ENCODE measurements at regions of chrX and their contacts with region 1.

Region 1: DNA sequence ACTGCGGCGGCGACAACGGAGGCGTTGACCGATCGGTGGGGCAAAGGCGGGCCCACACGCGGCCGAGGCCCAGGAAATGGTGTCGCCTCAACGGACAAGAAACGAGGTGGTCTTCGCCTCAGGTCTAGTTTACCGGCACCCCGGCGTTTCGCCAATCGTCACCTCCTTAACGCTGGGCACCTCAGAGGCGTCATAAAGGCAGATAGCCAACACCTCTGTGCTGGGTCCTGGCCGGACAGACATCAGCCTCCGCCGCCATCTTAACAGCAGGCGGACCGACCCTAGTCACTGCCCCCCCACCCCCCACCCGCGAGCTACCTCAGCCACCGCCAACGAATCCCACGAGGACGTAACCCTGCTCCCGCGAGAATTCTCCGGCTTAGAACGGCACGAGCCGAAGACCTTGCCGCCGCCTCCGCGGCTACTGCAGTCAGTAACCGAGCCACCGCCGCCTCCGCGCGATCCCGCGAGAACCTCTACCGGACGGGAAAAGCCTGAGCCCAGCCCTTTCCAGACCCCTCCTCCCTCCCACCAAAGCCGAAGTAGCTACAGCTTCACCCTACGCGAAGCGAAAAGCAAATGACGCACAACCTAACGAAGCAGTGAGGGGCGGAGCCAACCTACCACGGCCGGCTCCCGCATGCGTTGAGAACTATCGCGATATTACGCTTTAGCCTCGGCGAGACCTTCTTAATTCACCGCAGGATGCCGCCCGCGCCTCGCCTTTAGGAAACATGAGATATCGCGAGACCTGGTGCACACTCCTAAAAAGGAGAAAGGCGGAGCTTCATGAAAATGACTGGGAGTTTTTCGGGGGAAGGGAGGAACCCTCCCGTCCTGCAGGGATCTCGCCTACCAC is 2.7 kb downstream of the HUWE1 start:
- DNase-seq: peak; percentile 95
- ATAC-seq: peak; percentile 72
- H3K4me3 ChIP-seq: peak overlapping the region; percentile 67
- H3K27ac ChIP-seq: peak overlapping the region; percentile 82
- H3K4me1 ChIP-seq: no peaks in the 10 kb centered on the region
- H3K27me3 ChIP-seq: no peaks in the 10 kb centered on the region
- CTCF ChIP-seq: peak in 1 of 3 experiments; percentile 47; a peak in 1 of 6 replicates
- EP300 ChIP-seq: no peak
- POLR2A ChIP-seq: peak; percentile 81
- RAD21 ChIP-seq: no peak

Region 2: GRCh38 chrX:53476371-53476770 is 207.4 kb before region 1 on chrX:
- CTCF ChIA-PET with region 1: no interaction called
- POLR2A ChIA-PET with region 1: no interaction called
- RAD21 ChIA-PET with region 1: no interaction called
- SMC1A ChIA-PET with region 1: no interaction called
- in situ Hi-C with region 1: no loop called
- intact Hi-C with region 1: no loop called
- DNase-seq: no peak
- ATAC-seq: no peak
- H3K4me3 ChIP-seq: no peak overlapping the region
- H3K27ac ChIP-seq: no peak overlapping the region
- H3K4me1 ChIP-seq: no peaks in the 10 kb centered on the region
- H3K27me3 ChIP-seq: no peaks in the 10 kb centered on the region; a peak in 1 of 4 replicates
- CTCF ChIP-seq: no peak
- EP300 ChIP-seq: no peak
- POLR2A ChIP-seq: no peak
- RAD21 ChIP-seq: no peak

Region 3: GRCh38 chrX:53704294-53704693 is 20.5 kb after region 1 on chrX:
- CTCF ChIA-PET with region 1: interaction called, 4 read pairs
- POLR2A ChIA-PET with region 1: interaction called, 9 read pairs
- RAD21 ChIA-PET with region 1: interaction called, 10 read pairs
- SMC1A ChIA-PET with region 1: interaction called, 18 read pairs
- in situ Hi-C with region 1: no loop called
- intact Hi-C with region 1: no loop called
- DNase-seq: no peak
- ATAC-seq: peak; percentile 99
- H3K4me3 ChIP-seq: no peak overlapping the region
- H3K27ac ChIP-seq: peak overlapping the region; percentile 40
- H3K4me1 ChIP-seq: no peaks in the 10 kb centered on the region; the same call in 1 of the 2 replicates
- H3K27me3 ChIP-seq: no peaks in the 10 kb centered on the region
- CTCF ChIP-seq: no peak
- EP300 ChIP-seq: peak in 1 of 2 experiments; percentile 60; a peak in 1 of 4 replicates
- POLR2A ChIP-seq: no peak
- RAD21 ChIP-seq: no peak

Region 4: DNA sequence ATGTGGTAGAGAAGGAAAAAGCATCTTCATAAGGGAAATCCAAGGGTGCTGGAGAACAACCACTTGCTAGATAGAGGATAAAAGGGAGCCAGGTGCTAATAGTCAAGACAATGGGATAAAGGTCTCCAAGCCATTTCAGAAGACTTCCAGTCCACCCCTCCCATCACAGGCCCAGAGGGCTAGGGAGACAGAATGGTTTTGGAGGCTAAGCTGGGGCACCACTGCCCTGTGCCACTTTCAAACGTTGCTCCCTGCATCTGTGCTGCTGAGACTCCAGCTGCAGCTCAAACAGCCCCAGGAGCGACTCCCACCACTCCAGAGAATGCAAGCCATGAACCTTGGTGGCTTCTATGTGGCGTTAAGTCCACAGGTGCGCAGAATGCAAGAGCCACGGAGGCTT is 41.1 kb after region 1 on chrX:
- CTCF ChIA-PET with region 1: no interaction called
- POLR2A ChIA-PET with region 1: no interaction called
- RAD21 ChIA-PET with region 1: no interaction called
- SMC1A ChIA-PET with region 1: no interaction called
- in situ Hi-C with region 1: no loop called
- intact Hi-C with region 1: no loop called
- DNase-seq: no peak
- ATAC-seq: no peak
- H3K4me3 ChIP-seq: no peak overlapping the region
- H3K27ac ChIP-seq: no peak overlapping the region
- H3K4me1 ChIP-seq: no peaks in the 10 kb centered on the region
- H3K27me3 ChIP-seq: no peaks in the 10 kb centered on the region
- CTCF ChIP-seq: no peak
- EP300 ChIP-seq: no peak
- POLR2A ChIP-seq: no peak
- RAD21 ChIP-seq: no peak

Region 5: DNA sequence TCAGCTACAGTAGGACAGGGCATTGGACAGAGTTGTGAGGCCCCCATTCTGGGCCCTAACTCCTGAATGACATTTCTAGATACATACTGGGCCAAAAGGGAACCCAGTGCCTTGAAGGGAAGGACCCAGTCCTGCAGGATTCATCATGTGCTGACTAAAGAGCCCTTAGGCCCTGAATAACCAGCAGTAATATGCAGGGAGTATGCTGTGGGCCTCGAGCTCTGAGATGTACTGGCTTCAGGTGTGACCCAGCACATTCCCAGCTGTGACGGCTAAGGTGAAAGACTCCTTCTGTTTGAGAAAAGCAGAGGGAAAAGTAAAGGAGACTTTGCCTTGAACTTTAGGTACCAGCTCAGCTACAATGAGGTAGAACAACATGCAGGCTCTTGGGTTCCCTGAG is 140.9 kb after region 1 on chrX:
- CTCF ChIA-PET with region 1: interaction called, 28 read pairs
- POLR2A ChIA-PET with region 1: no interaction called
- RAD21 ChIA-PET with region 1: interaction called, 8 read pairs
- SMC1A ChIA-PET with region 1: interaction called, 4 read pairs
- in situ Hi-C with region 1: loop called (anchors 5 kb)
- intact Hi-C with region 1: no loop called
- DNase-seq: no peak
- ATAC-seq: no peak
- H3K4me3 ChIP-seq: no peak overlapping the region
- H3K27ac ChIP-seq: no peak overlapping the region
- H3K4me1 ChIP-seq: no peaks in the 10 kb centered on the region
- H3K27me3 ChIP-seq: no peaks in the 10 kb centered on the region
- CTCF ChIP-seq: no peak
- EP300 ChIP-seq: no peak
- POLR2A ChIP-seq: no peak
- RAD21 ChIP-seq: no peak

Region 6: DNA sequence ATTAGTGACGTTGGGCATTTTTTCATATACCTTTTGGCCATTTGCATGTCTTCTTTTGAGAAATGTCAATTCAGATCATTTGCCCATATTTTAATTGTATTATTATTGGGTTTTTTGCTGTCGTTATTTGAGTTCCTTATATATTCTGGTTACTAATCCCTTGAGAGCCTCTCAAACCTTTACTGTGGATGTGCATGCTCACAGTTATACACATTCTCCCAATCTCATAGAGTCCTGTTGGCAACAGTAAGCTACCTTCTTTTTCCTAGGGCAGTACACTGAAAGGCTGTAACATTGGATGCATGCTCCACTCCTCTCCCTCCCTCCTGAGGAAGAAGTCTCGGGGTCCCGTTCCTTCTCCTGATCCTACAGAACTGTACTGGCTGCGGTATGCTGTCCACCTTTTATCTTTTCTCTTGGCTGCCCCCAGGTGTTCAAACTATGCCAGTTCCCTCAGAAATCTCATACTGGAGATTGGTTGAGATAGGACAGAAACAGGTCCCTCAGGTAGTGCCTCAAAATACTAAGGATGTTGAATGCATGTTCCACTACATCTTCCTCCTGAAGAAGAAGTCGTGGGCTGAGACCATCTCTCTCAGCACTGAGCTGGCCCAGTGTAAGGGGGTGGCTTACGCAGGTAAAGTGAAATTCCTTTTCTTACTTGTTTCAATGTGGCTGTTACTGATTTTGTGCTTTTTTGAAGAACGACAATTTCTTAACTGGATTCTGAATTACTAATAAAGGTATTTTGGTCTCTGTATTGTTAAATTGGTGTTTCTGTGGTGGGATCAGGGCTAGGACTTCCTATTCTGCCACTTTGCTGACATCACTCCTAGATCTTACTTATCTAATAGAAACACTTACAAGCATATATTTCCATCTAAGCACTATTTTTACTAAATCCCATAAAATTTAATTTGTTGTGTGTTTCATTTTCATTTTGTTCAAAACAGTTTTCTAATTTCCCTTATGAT is 148.2 kb after region 1 on chrX:
- CTCF ChIA-PET with region 1: interaction called, 28 read pairs
- POLR2A ChIA-PET with region 1: interaction called, 3 read pairs
- RAD21 ChIA-PET with region 1: interaction called, 14 read pairs
- SMC1A ChIA-PET with region 1: interaction called, 11 read pairs
- in situ Hi-C with region 1: loop called (anchors 5 kb)
- intact Hi-C with region 1: loop called (anchors 2 kb)
- DNase-seq: peak; percentile 40
- ATAC-seq: peak; percentile 98
- H3K4me3 ChIP-seq: no peak overlapping the region
- H3K27ac ChIP-seq: no peak overlapping the region
- H3K4me1 ChIP-seq: no peaks in the 10 kb centered on the region
- H3K27me3 ChIP-seq: no peaks in the 10 kb centered on the region
- CTCF ChIP-seq: peak; percentile 59 to 66 (median 62)
- EP300 ChIP-seq: no peak
- POLR2A ChIP-seq: no peak
- RAD21 ChIP-seq: peak; percentile 70

Region 7: DNA sequence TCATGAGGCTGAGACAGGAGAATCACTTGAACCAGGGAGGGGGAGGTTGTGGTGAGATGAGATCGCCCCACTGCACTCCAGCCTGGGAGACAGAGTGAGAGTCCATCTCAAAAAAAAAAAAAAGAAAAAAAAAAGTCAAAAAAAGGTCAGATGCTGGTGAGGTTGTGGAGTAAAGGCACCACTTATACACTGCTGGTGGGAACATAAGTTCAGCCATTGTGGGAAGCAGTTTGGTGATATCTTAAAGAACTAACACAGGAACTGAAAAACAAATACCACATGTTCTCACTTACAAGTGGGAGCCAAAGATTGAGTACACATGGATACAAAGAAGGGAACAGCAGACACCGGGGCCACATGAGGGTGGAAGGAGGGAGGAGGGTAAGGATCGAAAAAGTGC is 211.5 kb after region 1 on chrX:
- CTCF ChIA-PET with region 1: no interaction called
- POLR2A ChIA-PET with region 1: no interaction called
- RAD21 ChIA-PET with region 1: no interaction called
- SMC1A ChIA-PET with region 1: no interaction called
- in situ Hi-C with region 1: no loop called
- intact Hi-C with region 1: no loop called
- DNase-seq: no peak
- ATAC-seq: no peak
- H3K4me3 ChIP-seq: no peak overlapping the region
- H3K27ac ChIP-seq: no peak overlapping the region
- H3K4me1 ChIP-seq: no peaks in the 10 kb centered on the region
- H3K27me3 ChIP-seq: no peaks in the 10 kb centered on the region
- CTCF ChIP-seq: no peak
- EP300 ChIP-seq: no peak
- POLR2A ChIP-seq: no peak
- RAD21 ChIP-seq: no peak

Region 8: GRCh38 chrX:54044126-54044876 is 360.5 kb after region 1 on chrX and contains the start of gene PHF8:
- CTCF ChIA-PET with region 1: no interaction called
- POLR2A ChIA-PET with region 1: interaction called, 4 read pairs
- RAD21 ChIA-PET with region 1: interaction called, 4 read pairs
- SMC1A ChIA-PET with region 1: no interaction called
- in situ Hi-C with region 1: no loop called
- intact Hi-C with region 1: loop called (anchors 5 kb)
- DNase-seq: peak; percentile 77
- ATAC-seq: peak; percentile 91
- H3K4me3 ChIP-seq: peak within 1 kb of the TSS; percentile 80
- H3K27ac ChIP-seq: peak within 1 kb of the TSS; percentile 83
- H3K4me1 ChIP-seq: peaks cover 4% of the 10 kb centered on the region; the same call in 1 of the 2 replicates
- H3K27me3 ChIP-seq: no peaks in the 10 kb centered on the region
- CTCF ChIP-seq: no peak
- EP300 ChIP-seq: no peak
- POLR2A ChIP-seq: peak; percentile 58
- RAD21 ChIP-seq: no peak
- polyA plus RNA-seq, gene PHF8: 2.4 TPM

Measured in GM12878 (cell line).